GM12878 (cell line): ENCODE measurements at regions of chr15 and their contacts with region 1.

Region 1: DNA sequence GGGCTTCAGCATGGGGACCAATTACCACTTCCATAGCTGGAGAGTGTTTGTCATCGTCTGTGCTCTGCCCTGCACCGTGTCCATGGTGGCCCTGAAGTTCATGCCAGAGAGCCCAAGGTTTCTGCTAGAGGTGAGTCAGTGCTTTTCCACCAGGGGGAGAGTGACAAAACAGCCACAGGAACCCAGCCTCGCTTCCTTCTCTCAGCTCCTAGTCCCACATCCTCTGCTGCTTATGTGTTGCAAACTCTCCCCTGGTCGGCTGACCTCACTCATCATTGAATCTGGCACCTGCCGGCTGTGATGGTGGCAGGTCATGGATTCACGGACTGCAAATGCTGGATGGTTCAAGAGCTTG is 158.3 kb downstream of the SV2B start:
- DNase-seq: no peak
- ATAC-seq: 0 out of 3 replicates have a peak, but pooled peaks have one; percentile 21
- H3K4me3 ChIP-seq: no peak overlapping the region
- H3K27ac ChIP-seq: no peak overlapping the region
- H3K4me1 ChIP-seq: no peaks in the 10 kb centered on the region
- H3K27me3 ChIP-seq: peaks cover 0 to 3% of the 10 kb centered on the region in 2 experiments; a peak in 2 of 4 replicates
- CTCF ChIP-seq: no peak
- EP300 ChIP-seq: no peak
- POLR2A ChIP-seq: no peak
- RAD21 ChIP-seq: no peak

Region 2: DNA sequence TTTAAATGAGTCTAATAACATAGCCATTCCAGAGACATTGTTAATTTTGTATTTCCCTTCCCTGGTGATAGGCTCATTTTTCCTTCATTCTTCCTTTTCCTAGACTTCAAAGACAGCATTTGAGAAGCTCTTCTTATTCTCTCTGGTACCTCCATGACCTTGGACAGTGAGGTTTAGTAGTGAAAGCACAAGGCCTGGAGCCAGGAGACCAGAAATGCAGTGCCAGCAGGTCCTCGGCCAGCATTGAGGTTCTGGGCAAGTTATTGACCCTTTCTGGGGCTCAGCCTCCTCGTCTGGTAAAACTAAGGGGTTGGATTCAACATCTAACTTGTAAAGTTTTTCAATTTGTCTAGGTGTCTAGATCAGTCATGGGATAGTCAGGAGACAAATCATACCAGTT is 11.4 kb before region 1 on chr15:
- CTCF ChIA-PET with region 1: interaction called, 18 read pairs
- POLR2A ChIA-PET with region 1: no interaction called
- RAD21 ChIA-PET with region 1: no interaction called
- SMC1A ChIA-PET with region 1: interaction called, 3 read pairs
- in situ Hi-C with region 1: no loop called
- intact Hi-C with region 1: no loop called
- DNase-seq: no peak
- ATAC-seq: no peak
- H3K4me3 ChIP-seq: no peak overlapping the region
- H3K27ac ChIP-seq: no peak overlapping the region
- H3K4me1 ChIP-seq: no peaks in the 10 kb centered on the region
- H3K27me3 ChIP-seq: no peaks in the 10 kb centered on the region
- CTCF ChIP-seq: no peak
- EP300 ChIP-seq: no peak
- POLR2A ChIP-seq: no peak
- RAD21 ChIP-seq: no peak